CD4-positive, alpha-beta memory T cell (primary cell): ENCODE measurements at regions of chr10 and their contacts with region 1.

Region 1: GRCh38 chr10:73910764-73911552 is at the start of gene PLAU:
- DNase-seq: peak; percentile 31 to 50 (median 38)
- H3K4me3 ChIP-seq: peak within 1 kb of the TSS; percentile 11 to 44
- H3K4me3 Mint-ChIP-seq: peak within 1 kb of the TSS; percentile 89 to 95 (median 92)
- H3K27ac ChIP-seq: no peak within 1 kb of the TSS
- H3K27ac Mint-ChIP-seq: peak within 1 kb of the TSS in 2 of 7 donors; percentile 29 to 41
- H3K4me1 ChIP-seq: peaks cover 29% of the 10 kb centered on the region
- H3K4me1 Mint-ChIP-seq: peaks cover 16 to 36% (median 25%) of the 10 kb centered on the region in 4 donors
- H3K27me3 ChIP-seq: peaks cover 13% of the 10 kb centered on the region
- H3K27me3 Mint-ChIP-seq: peaks cover 20 to 24% of the 10 kb centered on the region in 2 donors
- total RNA-seq, gene PLAU: 0.64 to 0.91 TPM

Region 2: GRCh38 chr10:73873142-73873837 is 37.7 kb before region 1 on chr10:
- CTCF ChIA-PET with region 1: no interaction called
- POLR2A ChIA-PET with region 1: no interaction called
- intact Hi-C with region 1: no loop called
- DNase-seq: no peak
- H3K4me3 ChIP-seq: peak overlapping the region in 1 of 2 donors; percentile 49
- H3K4me3 Mint-ChIP-seq: peak overlapping the region; percentile 83 to 90 (median 88)
- H3K27ac ChIP-seq: peak overlapping the region; percentile 42
- H3K27ac Mint-ChIP-seq: peak overlapping the region; percentile 70 to 93 (median 87)
- H3K4me1 ChIP-seq: peaks cover 64% of the 10 kb centered on the region
- H3K4me1 Mint-ChIP-seq: peaks cover 43 to 83% (median 61%) of the 10 kb centered on the region in 4 donors
- H3K27me3 ChIP-seq: no peaks in the 10 kb centered on the region
- H3K27me3 Mint-ChIP-seq: no peaks in the 10 kb centered on the region

Region 3: GRCh38 chr10:73926152-73926764 is 15.3 kb after region 1 on chr10:
- CTCF ChIA-PET with region 1: no interaction called
- POLR2A ChIA-PET with region 1: no interaction called
- intact Hi-C with region 1: loop called (anchors 2 kb)
- DNase-seq: no peak
- H3K4me3 ChIP-seq: no peak overlapping the region
- H3K4me3 Mint-ChIP-seq: no peak overlapping the region
- H3K27ac ChIP-seq: no peak overlapping the region
- H3K27ac Mint-ChIP-seq: no peak overlapping the region
- H3K4me1 ChIP-seq: peaks cover 19% of the 10 kb centered on the region
- H3K4me1 Mint-ChIP-seq: peaks cover 13 to 28% (median 15%) of the 10 kb centered on the region in 4 donors
- H3K27me3 ChIP-seq: no peaks in the 10 kb centered on the region
- H3K27me3 Mint-ChIP-seq: peaks cover 4 to 17% of the 10 kb centered on the region in 2 donors